ENCODE measurements at regions of chr19 and their contacts with region 1.

Region 1: GRCh38 chr19:5031231-5032100 is 62.6 kb downstream of the KDM4B start:
- DNase-seq: peak; percentile 90
- ATAC-seq: peak; percentile 88

Region 2: DNA sequence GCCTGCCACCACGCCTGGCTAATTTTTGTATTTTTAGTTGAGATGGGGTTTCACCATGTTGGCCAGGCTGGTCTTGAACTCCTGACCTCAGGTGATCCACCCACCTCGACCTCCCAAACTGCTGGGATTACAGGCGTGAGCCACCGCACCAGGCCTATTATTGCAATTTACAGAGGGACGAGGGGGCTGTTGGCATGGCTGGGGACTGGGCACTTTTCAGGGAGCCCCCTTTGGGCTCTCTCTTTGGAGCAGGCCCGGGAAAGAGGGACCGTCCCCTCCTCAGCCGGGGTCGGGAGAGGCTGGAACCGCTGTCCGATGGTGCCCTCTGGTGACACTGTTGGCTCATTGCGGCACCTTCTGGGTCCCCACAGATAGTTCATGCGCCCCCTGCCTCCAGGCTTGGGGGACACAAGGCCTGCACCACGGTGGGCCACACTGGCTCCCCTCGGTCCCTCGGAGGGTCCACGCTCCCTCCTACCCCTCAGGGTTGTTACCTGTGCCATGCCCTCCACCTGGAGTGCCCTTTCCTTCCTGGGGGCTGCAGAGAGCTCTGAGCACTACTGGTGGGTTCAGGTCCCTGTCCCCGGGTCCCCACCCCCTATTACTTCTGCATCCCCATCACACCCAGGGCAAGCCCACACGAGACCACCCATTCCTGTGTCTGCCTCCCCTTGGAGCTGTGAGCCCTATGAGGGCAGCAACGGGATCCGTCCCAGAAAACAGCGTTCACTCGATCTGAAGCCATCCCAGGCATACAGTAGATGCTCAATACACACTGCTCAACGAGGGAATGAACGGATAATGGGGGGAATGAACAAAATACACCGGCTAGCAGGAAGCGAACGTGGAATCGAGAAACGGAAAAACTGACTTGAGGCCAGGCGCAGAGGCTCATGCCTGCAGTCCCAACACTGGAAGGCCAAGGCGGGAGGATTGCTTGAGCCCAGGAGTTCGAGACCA is 227.4 kb before region 1 on chr19:
- intact Hi-C with region 1: loop called (anchors 5 kb)
- DNase-seq: peak; percentile 75
- ATAC-seq: peak; percentile 79

Region 3: DNA sequence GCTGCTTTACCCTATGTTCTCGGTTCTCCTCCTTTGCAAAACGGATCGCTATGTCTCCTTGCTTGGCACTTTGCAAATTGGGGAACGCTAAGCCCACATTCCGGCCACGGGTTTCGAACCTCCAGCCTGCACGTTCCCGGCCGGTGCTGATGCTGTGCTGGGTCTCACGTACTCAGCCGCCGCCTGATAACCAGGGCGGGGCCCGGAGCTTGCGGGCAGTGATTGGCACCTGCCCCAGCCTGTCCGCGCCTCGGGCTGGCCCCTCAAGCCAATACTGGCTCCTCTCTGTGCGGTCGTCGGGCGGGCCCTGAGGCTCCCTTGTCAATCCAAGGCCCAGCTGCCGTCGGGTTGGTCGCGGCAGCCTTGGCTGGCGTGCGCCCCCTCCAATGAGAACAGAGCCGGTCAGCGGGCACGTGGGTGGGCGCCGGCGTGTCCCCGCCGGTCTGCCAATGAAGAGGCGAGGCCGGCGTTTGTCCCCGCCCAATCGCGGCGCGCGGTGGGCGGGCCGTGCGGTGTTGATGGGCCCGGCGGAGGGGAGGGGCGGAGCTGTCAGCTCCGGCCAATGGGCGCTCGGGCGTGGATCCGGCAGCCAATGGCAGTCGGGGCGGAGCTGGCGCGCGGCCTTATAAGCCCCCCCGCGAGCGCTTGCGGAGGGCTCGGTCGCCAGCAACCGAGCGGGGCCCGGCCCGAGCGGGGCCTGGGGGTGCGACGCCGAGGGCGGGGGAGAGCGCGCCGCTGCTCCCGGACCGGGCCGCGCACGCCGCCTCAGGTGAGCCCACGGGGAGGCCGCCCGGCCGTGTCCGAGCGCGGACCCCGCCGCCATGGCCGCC is 62.8 kb before region 1 on chr19 and contains the start of gene KDM4B:
- intact Hi-C with region 1: no loop called
- DNase-seq: peak; percentile 100
- ATAC-seq: peak; percentile 95
- total RNA-seq, gene KDM4B: 34.6 TPM